Right ventricle myocardium inferior (tissue), 1 donor: ENCODE measurements at regions of chr4 and their contacts with region 1.

Region 1: GRCh38 chr4:183905081-183905592 is at the start of gene STOX2:
- DNase-seq: peak; percentile 90
- ATAC-seq: peak; percentile 97
- total RNA-seq, gene STOX2: 9.9 TPM

Region 2: GRCh38 chr4:183840311-183840710 is 64.8 kb before region 1 on chr4:
- intact Hi-C with region 1: loop called (anchors 2 kb)
- DNase-seq: peak; percentile 85
- ATAC-seq: peak; percentile 81

Region 3: GRCh38 chr4:183867247-183867646 is 37.9 kb before region 1 on chr4:
- intact Hi-C with region 1: loop called (anchors 5 kb)
- DNase-seq: no peak
- ATAC-seq: peak; percentile 48

Region 4: GRCh38 chr4:183960046-183960420 is 54.9 kb after region 1 on chr4:
- intact Hi-C with region 1: loop called (anchors 2 kb)
- DNase-seq: peak; percentile 66
- ATAC-seq: peak; percentile 91

Region 5: GRCh38 chr4:183987987-183988392 is 82.9 kb after region 1 on chr4:
- intact Hi-C with region 1: loop called (anchors 1 kb)
- DNase-seq: peak; percentile 72
- ATAC-seq: peak; percentile 92

Region 6: GRCh38 chr4:184053434-184053833 is 148.3 kb after region 1 on chr4:
- intact Hi-C with region 1: no loop called
- DNase-seq: no peak
- ATAC-seq: no peak

Region 7: DNA sequence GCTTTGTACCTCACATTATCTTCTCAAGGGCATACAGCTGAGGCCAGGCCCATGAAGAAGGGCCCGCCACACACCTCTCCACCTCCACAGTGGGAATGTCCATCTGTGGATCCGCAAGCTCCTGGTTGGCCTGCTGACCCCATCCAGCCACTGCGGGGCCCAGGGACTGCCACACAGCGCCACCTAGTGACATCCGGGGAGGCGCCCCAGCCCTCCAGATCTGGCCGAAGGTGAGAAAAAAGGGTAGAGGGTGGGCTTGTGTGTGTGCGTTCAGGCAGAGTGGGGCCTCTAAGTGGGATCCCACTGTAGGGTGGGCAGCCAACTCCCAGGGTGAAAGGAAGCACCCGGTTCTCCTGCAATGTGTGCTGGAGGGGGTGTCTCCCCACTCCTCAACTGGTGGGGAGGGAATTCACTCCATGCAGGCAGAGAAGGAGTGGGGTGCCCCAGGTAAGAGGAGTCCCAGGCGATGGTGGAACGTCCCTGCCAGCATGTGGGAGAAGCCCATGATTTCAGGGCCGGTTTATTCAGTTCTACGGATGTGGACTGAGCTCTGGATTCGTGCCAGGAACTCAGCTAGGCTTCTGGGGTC is 195.3 kb after region 1 on chr4:
- intact Hi-C with region 1: loop called (anchors 5 kb)
- DNase-seq: peak; percentile 86
- ATAC-seq: peak; percentile 73

Region 8: DNA sequence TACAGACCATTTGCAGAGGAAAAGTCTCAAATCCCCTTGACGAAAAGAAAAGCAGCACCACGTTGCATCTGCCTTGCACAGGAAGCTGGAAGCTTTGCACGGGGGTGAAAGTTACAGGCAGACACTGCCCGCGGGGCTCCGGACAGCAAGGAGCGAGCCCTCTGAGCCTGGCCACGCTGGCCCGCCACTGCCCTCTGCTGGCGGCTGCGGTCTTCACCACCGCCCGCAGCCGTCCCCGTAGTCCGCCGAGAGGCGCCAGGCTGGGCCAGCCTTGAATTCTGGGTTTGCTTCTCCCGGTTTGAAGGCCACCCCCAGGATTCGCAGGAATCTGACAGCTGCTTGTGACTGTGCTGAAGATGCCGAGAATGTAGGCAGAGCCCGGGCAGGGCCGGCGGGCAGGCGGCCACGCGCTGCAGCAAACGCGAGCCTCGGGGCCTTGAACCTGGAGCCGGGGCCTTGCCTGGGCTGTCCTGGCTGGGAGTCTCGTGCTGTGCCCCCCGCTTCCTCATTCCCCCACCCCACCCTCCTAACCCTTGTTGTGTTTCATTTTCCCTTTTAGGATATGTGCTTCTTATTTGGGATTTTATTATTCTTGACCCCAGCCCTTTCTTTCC is 263.4 kb after region 1 on chr4:
- intact Hi-C with region 1: loop called (anchors 2 kb)
- DNase-seq: peak; percentile 91
- ATAC-seq: peak; percentile 96